Activated naive CD4-positive, alpha-beta T cell treated with anti-CD3 and anti-CD28 coated beads for 36 hours (primary cell): ENCODE measurements at regions of chr10 and their contacts with region 1.

Region 1: GRCh38 chr10:71708301-71708703 is 11.3 kb downstream of the C10orf105 start:
- DNase-seq: peak; percentile 81
- H3K4me3 Mint-ChIP-seq: no peak overlapping the region
- H3K27ac Mint-ChIP-seq: no peak overlapping the region
- H3K4me1 Mint-ChIP-seq: peaks cover 36% of the 10 kb centered on the region
- H3K27me3 Mint-ChIP-seq: no peaks in the 10 kb centered on the region

Region 2: GRCh38 chr10:71359364-71360046 is 348.8 kb before region 1 on chr10:
- CTCF ChIA-PET with region 1: no interaction called
- intact Hi-C with region 1: loop called (anchors 1 kb)
- DNase-seq: no peak
- H3K4me3 Mint-ChIP-seq: no peak overlapping the region
- H3K27ac Mint-ChIP-seq: no peak overlapping the region
- H3K4me1 Mint-ChIP-seq: no peaks in the 10 kb centered on the region
- H3K27me3 Mint-ChIP-seq: no peaks in the 10 kb centered on the region

Region 3: DNA sequence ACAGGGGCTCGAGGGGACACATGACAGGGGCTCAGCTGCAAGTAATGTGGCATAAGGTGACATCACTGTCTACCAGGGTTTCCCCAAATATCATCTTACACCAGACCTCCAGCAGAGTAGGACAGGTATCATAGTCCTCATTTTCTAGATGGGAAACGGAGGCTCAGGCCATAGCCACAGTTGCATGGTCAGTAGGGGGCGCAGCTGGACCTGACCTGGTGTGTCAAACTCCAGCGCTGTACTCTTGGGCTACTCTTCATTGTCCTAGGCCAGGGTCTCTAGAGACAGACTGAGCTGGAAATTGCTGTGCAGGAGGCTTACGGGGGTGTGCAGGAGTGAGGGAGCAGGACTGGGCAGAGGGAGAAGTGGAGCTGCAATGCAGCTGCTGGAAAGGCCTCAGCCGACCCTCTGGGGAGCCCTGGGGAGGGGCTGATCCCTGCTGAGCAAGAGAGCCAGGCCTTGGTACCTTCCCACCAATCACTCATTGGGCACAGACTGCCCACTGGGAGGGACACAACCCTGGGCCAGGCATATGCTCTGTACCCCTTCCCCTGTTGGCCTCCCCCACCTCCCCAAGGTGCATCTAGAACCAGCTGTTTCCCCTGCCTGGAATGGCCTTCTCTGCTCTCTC is 221.7 kb before region 1 on chr10:
- CTCF ChIA-PET with region 1: interaction called, 3 read pairs
- intact Hi-C with region 1: loop called (anchors 1 kb)
- DNase-seq: peak; percentile 73
- H3K4me3 Mint-ChIP-seq: no peak overlapping the region
- H3K27ac Mint-ChIP-seq: no peak overlapping the region
- H3K4me1 Mint-ChIP-seq: no peaks in the 10 kb centered on the region
- H3K27me3 Mint-ChIP-seq: no peaks in the 10 kb centered on the region

Region 4: GRCh38 chr10:71542481-71542880 is 165.8 kb before region 1 on chr10:
- CTCF ChIA-PET with region 1: no interaction called
- intact Hi-C with region 1: no loop called
- DNase-seq: no peak
- H3K4me3 Mint-ChIP-seq: no peak overlapping the region
- H3K27ac Mint-ChIP-seq: no peak overlapping the region
- H3K4me1 Mint-ChIP-seq: no peaks in the 10 kb centered on the region
- H3K27me3 Mint-ChIP-seq: no peaks in the 10 kb centered on the region

Region 5: GRCh38 chr10:71696628-71697326 is 11.5 kb before region 1 on chr10:
- CTCF ChIA-PET with region 1: interaction called, 138 read pairs
- intact Hi-C with region 1: no loop called
- DNase-seq: peak; percentile 76
- H3K4me3 Mint-ChIP-seq: no peak overlapping the region
- H3K27ac Mint-ChIP-seq: no peak overlapping the region
- H3K4me1 Mint-ChIP-seq: peaks cover 35% of the 10 kb centered on the region
- H3K27me3 Mint-ChIP-seq: no peaks in the 10 kb centered on the region

Region 6: DNA sequence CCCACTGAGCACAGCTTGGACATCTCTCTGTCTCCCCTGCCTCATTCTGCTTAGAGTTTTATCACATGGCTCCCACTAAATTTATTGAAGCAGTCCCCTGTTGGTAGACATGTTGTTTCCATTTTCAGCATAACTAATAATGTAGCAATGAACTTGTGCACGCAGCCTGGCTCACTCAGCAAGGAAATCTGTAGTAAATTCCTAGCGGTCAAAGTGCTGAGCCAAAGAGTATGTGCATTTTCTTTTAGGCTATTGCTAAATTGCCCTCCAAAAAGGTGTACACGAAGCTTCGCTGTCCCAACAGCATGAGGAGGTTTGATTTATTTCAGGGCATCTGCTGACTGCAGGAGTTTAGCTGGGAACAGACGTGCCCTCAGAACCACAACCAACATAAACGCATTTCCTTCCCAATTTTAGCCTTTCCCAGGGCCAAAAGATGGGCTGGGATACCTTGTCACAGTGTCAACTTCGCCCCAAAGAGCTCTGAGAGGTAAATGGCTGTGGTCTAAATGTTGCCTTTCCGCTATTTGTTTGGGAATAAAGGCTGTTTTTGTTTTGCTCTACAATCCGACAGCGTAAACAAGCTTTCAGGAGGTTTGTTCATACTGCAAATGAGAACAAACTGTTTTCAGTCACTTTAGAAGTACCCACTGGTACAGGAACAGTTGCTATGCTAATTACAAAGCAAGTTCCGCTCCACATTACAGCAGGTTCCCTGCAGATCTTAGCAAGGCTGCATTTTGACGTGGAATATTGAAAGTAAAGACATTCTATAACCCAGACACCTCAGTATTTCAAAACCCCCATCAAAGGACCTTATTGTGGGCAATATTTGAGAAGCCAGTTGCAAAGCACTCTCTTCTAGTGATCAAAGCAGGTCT is 48.2 kb after region 1 on chr10:
- CTCF ChIA-PET with region 1: interaction called, 22 read pairs
- intact Hi-C with region 1: no loop called
- DNase-seq: peak; percentile 71
- H3K4me3 Mint-ChIP-seq: peak overlapping the region; percentile 68
- H3K27ac Mint-ChIP-seq: peak overlapping the region; percentile 96
- H3K4me1 Mint-ChIP-seq: peaks cover 88% of the 10 kb centered on the region
- H3K27me3 Mint-ChIP-seq: no peaks in the 10 kb centered on the region